ENCODE measurements at regions of chr15 and their contacts with region 1.

Region 1: GRCh38 chr15:78308422-78309032 is 9.1 kb upstream of the SKIC8 start:
- DNase-seq: no peak
- H3K4me3 ChIP-seq: no peak overlapping the region
- CTCF ChIP-seq: peak; percentile 95

Region 2: DNA sequence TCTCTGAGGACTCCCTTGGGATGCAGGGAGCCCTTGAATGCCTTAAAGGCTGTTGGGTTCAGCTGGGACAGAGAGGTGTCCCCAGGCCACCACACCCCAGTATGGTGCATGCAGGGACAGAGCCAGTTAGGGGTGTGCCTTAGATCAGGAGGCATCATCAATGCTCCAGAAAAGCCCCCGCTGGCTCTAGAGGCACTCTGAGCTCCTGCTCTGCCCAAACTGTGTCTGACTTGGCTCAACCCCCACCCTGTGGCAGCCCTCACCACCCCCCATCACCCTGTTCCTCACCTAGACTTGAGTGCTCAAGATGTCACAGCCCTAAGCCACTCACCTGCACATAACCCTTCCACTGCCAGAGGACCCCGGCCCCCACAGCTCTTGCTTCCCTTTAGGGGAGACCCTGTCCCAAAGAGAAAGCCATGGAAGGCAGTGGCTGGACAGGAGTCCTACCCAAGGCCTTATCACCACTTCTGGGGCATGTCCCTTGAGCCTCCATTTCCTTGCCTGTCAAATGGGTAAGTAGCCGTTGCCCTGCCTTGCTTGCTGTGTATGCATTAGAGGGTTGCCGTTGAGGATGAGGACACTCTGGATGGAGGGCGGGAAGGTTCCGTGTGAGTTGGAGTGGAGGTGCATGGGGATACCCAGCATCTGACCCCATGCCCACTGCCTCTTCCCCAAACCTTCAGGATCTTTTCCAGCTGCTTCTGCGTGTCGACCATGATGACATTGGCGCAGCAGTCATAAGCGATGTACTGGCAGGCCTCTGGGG is 115.5 kb before region 1 on chr15:
- CTCF ChIA-PET with region 1: no interaction called
- POLR2A ChIA-PET with region 1: no interaction called
- DNase-seq: no peak
- H3K4me3 ChIP-seq: no peak overlapping the region
- CTCF ChIP-seq: no peak

Region 3: DNA sequence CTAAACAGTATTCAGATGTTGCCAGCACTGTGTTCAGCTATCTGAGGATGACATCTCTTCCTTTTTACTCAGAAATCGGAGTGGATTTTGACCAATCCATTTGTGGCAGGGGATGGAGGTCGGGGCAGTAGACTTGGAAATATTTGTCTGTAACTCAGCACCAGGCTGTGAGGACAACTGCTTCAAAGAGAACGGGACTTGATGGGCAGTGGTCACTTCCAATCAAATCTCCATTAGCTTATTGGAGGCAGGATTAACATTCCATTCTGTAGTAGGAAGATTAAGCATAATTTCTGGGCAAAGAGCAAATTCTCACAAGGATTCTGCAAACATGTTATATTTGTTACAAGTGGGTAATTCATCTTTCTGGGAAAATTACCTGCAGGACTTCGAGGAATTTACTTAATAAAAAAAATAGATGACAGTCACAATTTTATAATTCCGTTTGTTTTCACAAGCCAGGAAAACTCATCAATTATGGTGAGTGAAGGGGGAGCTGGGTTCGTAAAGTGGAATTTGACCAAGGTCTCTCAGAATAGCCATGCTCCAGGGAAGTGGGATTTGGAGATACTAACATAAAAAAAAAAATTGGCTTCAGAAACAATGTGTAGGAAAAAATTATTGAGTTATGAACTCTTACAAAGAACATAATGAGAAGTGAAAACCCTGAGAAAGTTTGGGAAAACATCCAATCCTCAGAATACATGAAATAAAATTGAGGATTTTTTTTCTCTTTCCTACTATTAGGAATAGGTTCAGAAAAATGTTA is 49.8 kb after region 1 on chr15:
- CTCF ChIA-PET with region 1: interaction called, 10 read pairs
- POLR2A ChIA-PET with region 1: no interaction called
- DNase-seq: no peak
- H3K4me3 ChIP-seq: no peak overlapping the region
- CTCF ChIP-seq: no peak

Region 4: GRCh38 chr15:78429477-78429876 is 121.0 kb after region 1 on chr15:
- CTCF ChIA-PET with region 1: interaction called, 714 read pairs
- POLR2A ChIA-PET with region 1: no interaction called
- DNase-seq: no peak
- H3K4me3 ChIP-seq: no peak overlapping the region
- CTCF ChIP-seq: no peak

Region 5: GRCh38 chr15:78449220-78449999 is 140.9 kb after region 1 on chr15:
- CTCF ChIA-PET with region 1: interaction called, 13 read pairs
- POLR2A ChIA-PET with region 1: no interaction called
- DNase-seq: no peak
- H3K4me3 ChIP-seq: no peak overlapping the region
- CTCF ChIP-seq: no peak